ENCODE measurements at regions of chr3 and their contacts with region 1.

Region 1: DNA sequence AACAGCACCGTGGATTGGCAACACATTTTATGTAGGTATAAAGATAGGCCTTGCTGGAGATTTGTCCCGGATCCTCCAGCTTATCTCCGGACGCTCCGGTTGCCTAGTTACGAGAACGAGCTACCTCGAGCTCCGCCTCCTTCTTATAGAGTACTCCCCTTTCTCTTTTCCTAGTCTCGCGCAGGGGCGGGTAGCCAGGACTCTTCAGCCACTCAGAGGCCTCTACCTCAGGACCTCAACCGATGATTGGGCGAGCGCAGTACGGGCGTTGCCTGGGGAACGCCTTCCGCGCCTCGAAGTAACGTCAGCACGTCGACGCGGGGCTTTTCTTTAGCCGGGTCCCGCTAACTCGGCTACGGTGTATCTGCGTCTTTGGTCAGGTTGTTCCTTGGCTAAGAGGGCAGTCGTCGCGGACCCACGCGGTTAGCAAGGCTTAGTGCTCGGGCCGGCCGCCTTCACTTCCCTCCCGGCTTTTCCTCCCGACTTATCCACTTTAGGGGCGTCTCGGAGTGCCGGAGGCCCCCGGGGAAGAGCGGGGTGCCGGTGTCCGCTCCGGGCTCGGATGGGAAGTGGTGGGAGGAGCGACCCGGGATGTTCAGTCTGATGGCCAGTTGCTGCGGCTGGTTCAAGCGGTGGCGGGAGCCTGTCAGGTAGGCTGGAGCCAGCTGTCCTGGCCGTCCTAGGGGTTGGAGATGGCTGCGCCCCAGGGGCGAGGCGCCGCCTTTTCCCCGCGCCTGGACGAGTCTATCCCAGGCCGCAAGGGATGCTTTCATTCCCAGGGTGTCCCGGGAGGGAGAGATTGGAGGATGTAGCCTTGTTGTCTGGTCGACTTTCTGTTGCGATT is at the start of gene ARL13B:
- DNase-seq: peak; percentile 98 to 100
- H3K4me3 ChIP-seq: peak within 1 kb of the TSS; percentile 74
- H3K27ac ChIP-seq: peak within 1 kb of the TSS; percentile 14; the same call in 1 of the 2 replicates
- H3K4me1 ChIP-seq: peaks cover 14% of the 10 kb centered on the region
- H3K27me3 ChIP-seq: no peaks in the 10 kb centered on the region
- CTCF ChIP-seq: no peak
- total RNA-seq, gene ARL13B: 17.8 and 20.2 TPM in 2 replicates

Region 2: DNA sequence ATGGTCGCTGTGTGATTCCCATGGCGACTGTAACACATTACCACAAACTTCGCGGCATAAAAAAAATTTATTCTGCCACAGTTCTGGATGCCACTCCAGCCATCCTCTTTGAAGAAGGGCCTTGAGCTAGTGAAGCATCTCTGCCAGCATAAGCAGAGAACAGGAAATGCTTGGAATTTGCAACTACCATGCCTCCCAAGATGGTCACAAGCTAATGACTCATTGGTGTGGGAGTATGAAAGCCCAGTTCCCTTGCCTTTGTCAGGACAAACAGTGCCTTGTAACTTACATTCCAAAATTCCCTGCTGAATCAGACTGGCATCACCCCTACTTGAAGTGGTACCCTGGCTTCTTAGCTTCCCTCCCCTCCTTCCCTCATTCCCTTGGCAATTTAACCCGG is 136.1 kb before region 1 on chr3:
- CTCF ChIA-PET with region 1: no interaction called
- POLR2A ChIA-PET with region 1: no interaction called
- intact Hi-C with region 1: no loop called
- DNase-seq: peak in 1 of 2 experiments; percentile 42
- H3K4me3 ChIP-seq: no peak overlapping the region
- H3K27ac ChIP-seq: no peak overlapping the region
- H3K4me1 ChIP-seq: no peaks in the 10 kb centered on the region; the same call in 1 of the 2 replicates
- H3K27me3 ChIP-seq: 0 out of 2 replicates have a peak, but pooled peaks cover 2% of the 10 kb centered on the region
- CTCF ChIP-seq: no peak

Region 3: GRCh38 chr3:94028093-94028833 is 48.2 kb after region 1 on chr3 and contains the start of gene STX19:
- CTCF ChIA-PET with region 1: no interaction called
- POLR2A ChIA-PET with region 1: interaction called, 10 read pairs
- intact Hi-C with region 1: no loop called
- DNase-seq: peak; percentile 19 to 96
- H3K4me3 ChIP-seq: peak within 1 kb of the TSS; percentile 56
- H3K27ac ChIP-seq: peak within 1 kb of the TSS; percentile 60
- H3K4me1 ChIP-seq: peaks cover 18% of the 10 kb centered on the region
- H3K27me3 ChIP-seq: no peaks in the 10 kb centered on the region
- CTCF ChIP-seq: no peak
- total RNA-seq, gene STX19: 3.4 and 5.5 TPM in 2 replicates

Measured in PC-9 (cell line).